Naive thymus-derived CD8-positive, alpha-beta T cell (primary cell): ENCODE measurements at regions of chr6 and their contacts with region 1.

Region 1: GRCh38 chr6:37499433-37500293 is at the start of gene CCDC167:
- DNase-seq: peak; percentile 89 to 98 (median 94)
- ATAC-seq: peak; percentile 60 to 78
- H3K4me3 Mint-ChIP-seq: peak within 1 kb of the TSS; percentile 91 to 99 (median 97)
- H3K27ac Mint-ChIP-seq: peak within 1 kb of the TSS; percentile 95 to 100 (median 96)
- H3K4me1 Mint-ChIP-seq: peaks cover 37 to 83% (median 61%) of the 10 kb centered on the region in 4 donors
- H3K27me3 Mint-ChIP-seq: no peaks in the 10 kb centered on the region
- polyA plus RNA-seq, gene CCDC167: 64.3 to 74.7 (median 69.3) TPM

Region 2: GRCh38 chr6:37538107-37538506 is 38.4 kb after region 1 on chr6:
- POLR2A ChIA-PET with region 1: interaction called, 20 read pairs
- DNase-seq: no peak
- ATAC-seq: no peak
- H3K4me3 Mint-ChIP-seq: no peak overlapping the region
- H3K27ac Mint-ChIP-seq: peak overlapping the region in 3 of 10 donors; percentile 54 to 86 (median 67)
- H3K4me1 Mint-ChIP-seq: peaks cover 9 to 42% (median 15%) of the 10 kb centered on the region in 4 donors
- H3K27me3 Mint-ChIP-seq: peaks cover 0 to 2% (median 0%) of the 10 kb centered on the region in 5 donors